Left ventricle myocardium inferior (tissue), 1 donor: ENCODE measurements at regions of chr13 and their contacts with region 1.

Region 1: DNA sequence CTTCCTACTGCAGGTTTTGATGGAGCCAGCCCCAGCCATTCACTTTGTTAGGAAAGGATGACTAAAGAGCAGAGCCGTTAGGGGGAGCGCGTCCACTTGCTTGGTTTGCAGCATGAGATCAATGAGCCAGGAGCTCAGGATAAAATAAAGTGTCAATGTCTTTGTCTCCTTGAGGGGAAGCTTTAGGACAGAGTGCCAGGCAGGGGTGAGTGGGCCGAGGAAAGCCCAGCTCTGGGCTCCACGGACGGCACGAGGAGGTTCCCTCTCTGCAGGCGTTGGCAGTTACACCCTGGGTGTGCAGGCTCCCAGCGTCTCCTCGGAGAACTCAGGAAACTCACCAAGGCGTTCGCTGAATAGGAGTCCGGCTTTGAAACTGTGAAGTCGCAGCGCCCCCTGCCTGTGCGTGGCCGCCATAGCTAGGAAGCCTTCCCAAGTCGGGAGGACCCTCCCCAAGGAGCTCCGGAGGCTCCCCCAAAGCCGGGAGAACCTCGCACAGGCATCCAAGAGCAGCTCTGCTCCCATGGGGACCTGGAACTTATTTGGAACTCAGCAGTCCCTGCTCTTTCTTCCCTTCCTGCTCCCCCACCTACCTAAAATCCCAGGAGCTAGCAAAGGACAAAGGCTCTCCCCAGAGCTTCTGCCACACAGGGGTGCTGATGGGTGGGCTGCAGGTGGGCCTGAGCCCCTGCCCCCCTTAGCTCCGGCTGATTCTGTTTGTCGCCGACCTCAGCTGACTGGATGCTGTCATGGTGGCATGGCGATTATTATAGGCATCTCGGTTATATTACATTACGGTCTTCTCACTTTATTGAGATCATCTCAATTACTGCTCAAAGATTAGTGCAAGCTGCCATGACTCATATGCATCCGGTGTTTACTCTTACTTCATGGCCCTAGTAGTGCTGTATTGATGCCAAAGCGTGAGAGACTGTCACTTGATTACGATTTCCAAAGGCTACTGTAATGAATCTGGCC is 34.4 kb downstream of the GSX1 start:
- DNase-seq: peak; percentile 76
- H3K4me3 ChIP-seq: peak overlapping the region; percentile 48
- H3K27ac ChIP-seq: no peak overlapping the region
- H3K4me1 ChIP-seq: peaks cover 17% of the 10 kb centered on the region
- H3K27me3 ChIP-seq: peaks cover 96% of the 10 kb centered on the region
- CTCF ChIP-seq: no peak

Region 2: DNA sequence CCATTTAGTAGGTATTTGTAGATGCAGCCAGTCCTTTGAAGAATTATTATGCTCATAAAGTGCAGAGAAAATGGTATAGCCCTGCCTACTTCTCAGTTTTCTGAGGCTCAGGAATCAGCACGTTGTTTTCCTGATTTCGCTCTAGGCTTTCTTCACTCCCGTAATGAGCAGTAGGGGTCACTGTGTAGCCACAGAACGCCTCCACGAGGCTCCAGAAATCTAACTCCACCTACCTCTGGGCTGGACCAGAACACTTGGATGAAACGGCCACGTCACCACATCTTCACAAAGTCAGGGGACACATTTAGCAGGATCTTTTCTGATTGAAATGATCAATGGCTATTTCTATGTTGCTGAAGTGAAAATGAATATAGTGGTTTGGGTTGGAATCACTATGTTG is 452.0 kb before region 1 on chr13:
- intact Hi-C with region 1: loop called (anchors 5 kb)
- DNase-seq: peak; percentile 30
- H3K4me3 ChIP-seq: no peak overlapping the region
- H3K27ac ChIP-seq: no peak overlapping the region
- H3K4me1 ChIP-seq: no peaks in the 10 kb centered on the region
- H3K27me3 ChIP-seq: peaks cover 59% of the 10 kb centered on the region
- CTCF ChIP-seq: peak; percentile 82

Region 3: GRCh38 chr13:27533155-27533643 is 293.5 kb before region 1 on chr13:
- intact Hi-C with region 1: loop called (anchors 5 kb)
- DNase-seq: peak; percentile 84
- H3K4me3 ChIP-seq: peak overlapping the region; percentile 50
- H3K27ac ChIP-seq: no peak overlapping the region
- H3K4me1 ChIP-seq: peaks cover 9% of the 10 kb centered on the region
- H3K27me3 ChIP-seq: no peaks in the 10 kb centered on the region
- CTCF ChIP-seq: peak; percentile 97

Region 4: DNA sequence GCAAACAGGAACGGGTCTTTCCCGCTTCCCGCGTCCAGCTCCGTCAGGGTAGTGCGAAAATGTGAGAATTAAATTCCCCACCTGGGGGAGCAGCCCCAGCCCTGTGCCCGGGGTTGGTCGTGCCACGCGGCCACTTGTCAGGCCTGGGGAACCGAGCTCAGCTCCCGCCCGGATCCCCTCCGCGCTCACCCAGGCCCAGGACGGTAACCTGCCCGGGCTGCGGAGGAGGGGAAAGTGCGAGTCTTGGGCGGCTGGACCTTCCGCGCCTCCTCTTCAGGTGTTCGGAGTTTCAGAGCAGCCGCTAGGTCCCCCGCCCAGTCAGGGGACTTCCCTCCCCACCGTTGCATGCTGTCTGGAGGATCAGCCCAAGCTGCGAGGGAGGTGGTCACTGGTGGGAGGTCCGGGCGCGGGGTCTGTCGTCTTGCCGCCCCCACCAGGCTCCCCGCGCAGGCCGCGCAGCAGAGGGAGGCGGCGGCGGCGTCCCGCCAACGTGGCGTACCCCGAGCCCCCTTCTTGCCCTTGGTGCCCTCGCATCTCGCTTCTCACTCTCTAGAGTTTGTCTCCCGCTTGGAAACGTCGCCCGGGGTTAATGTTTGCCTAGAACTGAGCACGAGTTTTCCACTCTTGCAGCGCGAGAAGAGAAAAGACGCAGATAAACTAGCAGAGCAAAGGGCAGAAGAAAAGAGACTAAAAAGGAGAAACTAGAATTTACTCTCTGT is 153.8 kb after region 1 on chr13:
- intact Hi-C with region 1: loop called (anchors 5 kb)
- DNase-seq: no peak
- H3K4me3 ChIP-seq: no peak overlapping the region
- H3K27ac ChIP-seq: no peak overlapping the region
- H3K4me1 ChIP-seq: peaks cover 38% of the 10 kb centered on the region
- H3K27me3 ChIP-seq: peaks cover 98% of the 10 kb centered on the region
- CTCF ChIP-seq: no peak